ENCODE measurements at regions of chr1 and their contacts with region 1.

Region 1: DNA sequence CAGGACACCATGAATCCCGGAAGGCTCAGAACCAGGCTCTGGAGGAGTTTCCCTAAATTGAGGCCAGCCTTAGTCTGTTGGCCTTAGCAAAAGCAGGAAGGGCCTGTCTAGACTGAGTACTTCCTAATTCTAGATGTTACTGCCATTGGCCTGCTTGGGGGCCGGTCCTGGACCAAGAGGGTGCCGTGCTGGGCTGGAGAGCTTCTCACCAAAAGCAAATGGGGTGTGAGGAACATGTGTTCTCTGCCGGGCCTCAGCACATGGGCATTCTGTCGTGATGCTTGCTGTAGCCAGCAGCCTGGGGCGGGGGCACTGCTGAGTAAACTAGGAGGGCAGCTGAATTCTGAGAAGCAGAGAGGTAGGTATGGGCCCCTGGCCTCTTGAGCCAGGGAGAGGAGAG is 35.7 kb upstream of the MAN1C1 start:
- DNase-seq: peak in 1 of 14 experiments; percentile 14
- ATAC-seq: no peak
- H3K4me3 ChIP-seq: no peak overlapping the region
- H3K4me3 Mint-ChIP-seq: no peak overlapping the region
- H3K27ac ChIP-seq: no peak overlapping the region
- H3K27ac Mint-ChIP-seq: no peak overlapping the region
- H3K4me1 ChIP-seq: no peaks in the 10 kb centered on the region
- H3K4me1 Mint-ChIP-seq: peaks cover 12% of the 10 kb centered on the region
- H3K27me3 ChIP-seq: no peaks in the 10 kb centered on the region
- H3K27me3 Mint-ChIP-seq: no peaks in the 10 kb centered on the region
- CTCF ChIP-seq: no peak

Region 2: DNA sequence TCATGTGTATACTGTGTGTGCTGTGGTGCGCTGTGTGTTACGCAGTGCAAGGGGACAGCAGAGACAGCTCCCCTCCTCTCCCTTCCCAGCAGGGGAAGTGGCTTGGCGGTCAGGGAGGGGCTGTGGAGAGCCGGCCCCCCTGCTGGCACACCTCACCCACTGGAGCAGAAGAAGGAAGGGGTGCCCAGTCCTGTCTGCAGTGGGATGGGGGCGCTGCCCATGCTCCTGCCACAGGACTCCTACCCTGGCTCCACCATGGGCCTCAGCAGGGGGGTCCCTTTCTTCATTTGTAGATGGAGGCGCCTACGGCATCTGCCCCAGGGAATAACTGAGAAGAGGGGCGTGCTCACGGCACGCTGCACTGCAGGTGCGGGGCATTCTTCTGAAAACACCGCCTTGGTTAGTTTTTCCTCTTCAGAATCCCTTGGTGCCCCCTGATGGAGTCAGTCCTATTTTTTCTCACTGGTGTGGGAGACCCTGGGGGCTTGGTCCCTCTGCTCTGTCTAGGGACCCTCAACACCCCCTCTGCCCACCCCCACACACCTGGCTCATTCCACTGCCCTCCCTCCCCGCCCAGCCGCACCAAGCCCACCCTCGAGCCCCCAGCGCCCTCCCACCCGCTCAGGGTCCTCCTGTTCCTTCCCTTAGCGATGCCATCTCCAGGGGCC is 51.3 kb before region 1 on chr1:
- CTCF ChIA-PET with region 1: no interaction called
- POLR2A ChIA-PET with region 1: no interaction called
- intact Hi-C with region 1: no loop called
- DNase-seq: no peak
- ATAC-seq: no peak
- H3K4me3 ChIP-seq: no peak overlapping the region
- H3K4me3 Mint-ChIP-seq: no peak overlapping the region
- H3K27ac ChIP-seq: no peak overlapping the region
- H3K27ac Mint-ChIP-seq: no peak overlapping the region
- H3K4me1 ChIP-seq: no peaks in the 10 kb centered on the region
- H3K4me1 Mint-ChIP-seq: no peaks in the 10 kb centered on the region
- H3K27me3 ChIP-seq: no peaks in the 10 kb centered on the region
- H3K27me3 Mint-ChIP-seq: no peaks in the 10 kb centered on the region
- CTCF ChIP-seq: no peak

Region 3: DNA sequence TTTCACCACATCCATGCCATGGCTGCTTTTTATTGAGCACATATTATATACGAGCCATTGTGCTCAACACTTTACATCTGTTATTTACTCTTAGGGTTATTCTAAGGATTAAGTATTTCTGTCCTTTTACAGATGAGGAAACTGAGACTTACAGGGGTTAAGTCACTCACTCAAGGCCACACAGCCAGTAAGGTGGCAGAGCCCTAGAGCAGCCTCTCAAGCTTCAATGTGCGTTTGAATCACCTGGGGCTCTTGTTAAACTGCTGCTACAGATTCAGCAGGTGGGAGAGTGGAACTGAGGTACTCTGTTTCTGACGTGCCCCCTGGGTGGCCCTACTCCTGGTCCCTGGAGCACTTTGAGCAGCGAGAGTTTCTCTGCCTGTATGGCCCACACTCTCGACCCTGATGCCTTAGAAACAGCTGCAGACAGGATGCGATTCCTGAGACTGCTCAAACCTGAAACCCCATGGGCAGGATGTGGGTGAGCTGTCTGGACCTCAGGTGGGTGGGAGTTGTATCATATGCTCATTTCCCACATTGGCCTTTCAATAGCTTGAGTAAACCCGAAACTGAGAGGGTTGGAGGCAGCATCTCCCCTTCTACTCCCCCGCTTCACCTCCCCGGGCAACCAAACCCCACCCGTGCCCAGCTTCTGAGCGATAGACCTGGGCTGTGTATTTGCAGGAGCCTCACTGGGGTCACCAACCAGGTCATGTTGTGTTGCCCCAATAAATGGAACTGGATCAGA is 95.0 kb after region 1 on chr1:
- CTCF ChIA-PET with region 1: no interaction called
- POLR2A ChIA-PET with region 1: no interaction called
- intact Hi-C with region 1: no loop called
- DNase-seq: peak; percentile 41 to 90 (median 66)
- ATAC-seq: peak; percentile 80
- H3K4me3 ChIP-seq: peak overlapping the region; percentile 37
- H3K4me3 Mint-ChIP-seq: peak overlapping the region; percentile 83
- H3K27ac ChIP-seq: peak overlapping the region; percentile 53 to 63
- H3K27ac Mint-ChIP-seq: peak overlapping the region; percentile 96
- H3K4me1 ChIP-seq: peaks cover 63% of the 10 kb centered on the region
- H3K4me1 Mint-ChIP-seq: peaks cover 94% of the 10 kb centered on the region
- H3K27me3 ChIP-seq: no peaks in the 10 kb centered on the region
- H3K27me3 Mint-ChIP-seq: no peaks in the 10 kb centered on the region
- CTCF ChIP-seq: no peak

Region 4: DNA sequence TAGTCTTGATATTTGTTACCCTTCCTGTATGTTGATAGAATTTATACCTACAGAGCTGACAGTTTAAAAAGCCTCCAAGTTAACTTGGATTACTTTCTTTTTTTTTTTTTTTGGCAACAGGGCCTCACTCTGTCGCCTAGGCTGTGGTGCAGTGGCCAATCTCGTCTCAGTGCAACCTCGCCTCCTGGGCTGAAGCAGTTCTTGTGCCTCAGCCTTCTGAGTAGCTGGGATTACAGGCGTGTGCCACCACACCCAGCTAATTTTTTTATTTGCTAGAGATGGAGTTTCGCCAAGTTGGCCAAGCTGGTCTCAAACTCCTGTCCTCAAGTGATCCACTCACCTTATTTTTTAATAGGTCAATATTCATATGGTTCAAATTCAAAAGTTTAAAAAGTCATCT is 1686.2 kb after region 1 on chr1:
- CTCF ChIA-PET with region 1: no interaction called
- POLR2A ChIA-PET with region 1: no interaction called
- intact Hi-C with region 1: loop called in 1 of 2 experiments (anchors 10 kb)
- DNase-seq: no peak
- ATAC-seq: no peak
- H3K4me3 ChIP-seq: no peak overlapping the region
- H3K4me3 Mint-ChIP-seq: no peak overlapping the region
- H3K27ac ChIP-seq: no peak overlapping the region
- H3K27ac Mint-ChIP-seq: no peak overlapping the region
- H3K4me1 ChIP-seq: no peaks in the 10 kb centered on the region
- H3K4me1 Mint-ChIP-seq: no peaks in the 10 kb centered on the region
- H3K27me3 ChIP-seq: no peaks in the 10 kb centered on the region
- H3K27me3 Mint-ChIP-seq: no peaks in the 10 kb centered on the region
- CTCF ChIP-seq: no peak

Measured in CD4-positive, alpha-beta T cell (primary cell).